ENCODE measurements at regions of chr10 and their contacts with region 1.

Region 1: DNA sequence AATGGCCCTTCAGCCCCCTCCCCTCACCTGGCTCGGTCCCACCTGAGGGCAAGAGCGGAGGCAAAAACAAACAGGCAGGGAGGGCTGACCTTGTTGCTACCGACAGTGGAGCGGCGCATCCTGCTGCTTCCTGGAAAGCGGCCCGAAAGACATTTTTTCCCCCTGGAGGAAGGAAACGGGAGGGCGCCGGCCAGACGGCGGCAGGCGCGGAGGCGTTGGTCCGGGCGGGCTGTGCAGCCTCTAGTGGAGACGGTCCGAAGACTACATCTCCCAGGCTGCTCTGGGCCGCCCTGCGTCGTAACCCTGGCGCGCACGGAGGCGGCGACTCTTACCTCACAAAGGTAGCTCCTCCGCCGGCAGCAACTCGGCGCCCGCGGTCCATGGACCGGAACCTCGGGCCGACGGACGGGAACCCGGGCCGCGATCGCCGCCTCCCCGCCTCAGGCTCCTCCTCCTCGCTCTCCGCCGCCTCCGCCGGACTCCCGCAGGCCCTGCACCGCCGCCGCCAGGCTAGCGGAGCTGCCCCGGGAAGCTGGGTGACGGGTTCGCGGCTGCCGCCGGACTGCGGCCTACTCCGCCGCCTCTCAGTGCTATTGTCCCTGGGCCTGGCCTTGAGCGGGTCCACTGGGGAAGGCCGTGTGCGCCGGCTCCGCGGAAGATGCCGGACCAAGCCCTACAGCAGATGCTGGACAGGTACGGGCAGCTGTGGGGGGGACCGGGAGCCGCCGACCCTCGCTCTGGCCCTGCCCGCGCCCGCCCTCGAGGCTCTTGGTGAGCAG is at the starts of genes CPEB3 and MARCHF5:
- DNase-seq: peak; percentile 98
- ATAC-seq: peak; percentile 99
- total RNA-seq, gene CPEB3: 14.4 TPM
- total RNA-seq, gene MARCHF5: 38.2 TPM

Region 2: GRCh38 chr10:92087750-92088395 is 203.2 kb before region 1 on chr10:
- intact Hi-C with region 1: loop called (anchors 5 kb)
- DNase-seq: peak; percentile 55
- ATAC-seq: peak; percentile 89

Region 3: GRCh38 chr10:92240289-92241157 is 50.5 kb before region 1 on chr10:
- intact Hi-C with region 1: loop called (anchors 5 kb)
- DNase-seq: peak; percentile 42
- ATAC-seq: peak; percentile 81

Measured in Right ventricle myocardium superior (tissue), 1 donor.